ENCODE measurements at regions of chr10 and their contacts with region 1.

Region 1: DNA sequence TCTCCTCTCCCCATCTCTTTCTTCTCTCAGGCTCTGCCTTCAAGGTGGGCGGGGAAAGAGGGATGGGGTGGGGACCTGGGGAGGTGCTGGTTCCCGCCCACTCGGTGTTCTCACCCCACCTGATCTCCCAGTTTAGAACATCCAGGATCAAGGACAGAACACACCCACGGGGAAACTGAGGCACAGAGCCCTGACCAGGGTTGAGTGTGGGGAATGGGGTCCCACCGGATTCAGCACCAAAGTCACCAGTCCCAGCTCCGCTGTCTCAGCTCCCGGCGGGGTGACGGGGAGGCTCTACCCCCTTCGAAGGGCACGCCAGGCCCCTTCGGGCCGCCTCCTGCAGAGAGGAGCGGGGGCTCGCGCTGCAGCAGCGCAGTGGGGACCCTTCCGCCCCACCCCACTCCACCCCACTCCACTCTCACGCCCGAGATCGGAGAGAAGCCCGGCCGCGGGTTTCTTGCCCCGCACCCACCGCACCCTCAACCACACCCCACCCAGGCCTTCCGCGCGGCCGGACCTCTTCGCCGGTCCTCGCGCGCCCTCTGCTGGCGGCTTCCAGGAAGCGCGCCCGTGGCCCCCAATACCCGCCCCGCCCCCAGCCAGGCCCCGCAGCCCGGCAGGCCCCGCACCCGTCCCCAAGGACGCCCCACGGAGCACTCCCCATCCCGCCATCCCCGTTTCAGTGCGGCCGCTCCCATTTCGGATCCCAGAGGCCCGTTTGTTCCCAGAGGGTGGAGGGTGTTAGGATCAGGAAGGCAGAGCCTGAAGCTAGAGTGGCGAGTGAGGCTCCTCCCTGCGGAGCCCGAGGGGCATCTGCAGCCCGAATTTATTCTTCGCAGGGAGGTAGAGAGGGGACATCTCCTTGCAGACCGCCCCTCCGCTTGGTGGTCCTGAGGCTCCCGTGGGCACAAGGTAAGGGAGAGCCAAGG is 18.0 kb downstream of the POLL start:
- DNase-seq: peak; percentile 69 to 88
- ATAC-seq: peak; percentile 69 to 88
- H3K4me3 ChIP-seq: peak overlapping the region; percentile 63
- H3K27ac ChIP-seq: peak overlapping the region; percentile 81 to 92
- H3K4me1 ChIP-seq: peaks cover 10% of the 10 kb centered on the region; the same call in 2 of the 3 replicates
- CTCF ChIP-seq: peak; percentile 93
- EP300 ChIP-seq: no peak
- POLR2A ChIP-seq: peak; percentile 26; the same call in 1 of the 2 replicates
- RAD21 ChIP-seq: peak; percentile 75 to 96

Region 2: DNA sequence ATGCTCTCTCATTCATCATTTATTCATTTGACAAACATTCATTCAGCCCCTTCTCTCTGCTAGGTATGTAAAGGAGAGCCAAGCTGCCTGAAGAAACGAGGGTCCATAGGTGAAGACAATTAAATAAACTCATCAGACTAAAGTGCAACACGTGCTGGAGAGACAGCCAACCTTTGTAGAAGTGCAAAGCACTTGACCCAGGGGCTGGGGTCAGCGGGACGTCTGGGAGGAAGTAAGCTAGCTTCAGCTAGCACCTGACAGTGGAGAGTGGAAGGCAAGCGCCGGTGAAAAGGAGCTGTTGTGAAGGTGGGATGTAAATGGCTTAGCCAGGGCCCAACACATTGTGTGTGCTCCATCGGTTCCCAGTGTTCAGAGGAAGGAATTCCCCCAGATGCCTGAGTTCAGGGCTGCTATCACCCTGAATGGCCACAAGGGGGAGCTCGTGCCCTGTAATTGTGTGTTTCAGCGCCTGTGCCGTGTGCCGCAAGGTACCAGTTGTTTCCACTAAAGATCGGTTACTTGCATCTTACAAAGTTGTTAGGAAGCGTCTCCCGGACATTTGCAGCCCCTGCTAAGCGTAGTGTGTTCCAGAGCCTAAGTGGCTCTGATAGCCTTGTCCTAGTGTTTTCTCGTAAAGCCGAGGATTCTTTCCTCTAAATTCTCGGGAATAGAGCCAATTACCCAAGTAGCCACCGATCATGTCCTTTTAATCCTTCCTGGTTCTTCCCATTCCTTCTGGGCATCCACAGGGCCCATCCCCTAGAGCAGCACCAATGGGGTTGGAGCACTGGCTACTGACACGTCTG is 408.4 kb before region 1 on chr10:
- CTCF ChIA-PET with region 1: interaction called, 21 read pairs
- POLR2A ChIA-PET with region 1: no interaction called
- DNase-seq: peak; percentile 80 to 87
- ATAC-seq: peak; percentile 94 to 96
- H3K4me3 ChIP-seq: peak overlapping the region; percentile 44
- H3K27ac ChIP-seq: peak overlapping the region in 1 of 2 experiments; percentile 49; a peak in 1 of 6 replicates
- H3K4me1 ChIP-seq: 0 out of 3 replicates have a peak, but pooled peaks cover 6% of the 10 kb centered on the region
- CTCF ChIP-seq: peak; percentile 95
- EP300 ChIP-seq: no peak
- POLR2A ChIP-seq: no peak
- RAD21 ChIP-seq: peak; percentile 90 to 91

Region 3: GRCh38 chr10:101441541-101442455 is 128.3 kb before region 1 on chr10:
- CTCF ChIA-PET with region 1: interaction called, 13 read pairs
- POLR2A ChIA-PET with region 1: no interaction called
- DNase-seq: peak; percentile 62 to 83
- ATAC-seq: peak; percentile 98 to 99
- H3K4me3 ChIP-seq: no peak overlapping the region
- H3K27ac ChIP-seq: no peak overlapping the region
- H3K4me1 ChIP-seq: peaks cover 5% of the 10 kb centered on the region; the same call in 1 of the 3 replicates
- CTCF ChIP-seq: peak; percentile 83
- EP300 ChIP-seq: no peak
- POLR2A ChIP-seq: no peak
- RAD21 ChIP-seq: peak; percentile 86 to 89

Region 4: GRCh38 chr10:101552442-101552841 is 17.7 kb before region 1 on chr10:
- CTCF ChIA-PET with region 1: interaction called, 22 read pairs
- POLR2A ChIA-PET with region 1: no interaction called
- DNase-seq: no peak
- ATAC-seq: no peak
- H3K4me3 ChIP-seq: no peak overlapping the region
- H3K27ac ChIP-seq: no peak overlapping the region
- H3K4me1 ChIP-seq: no peaks in the 10 kb centered on the region
- CTCF ChIP-seq: no peak
- EP300 ChIP-seq: no peak
- POLR2A ChIP-seq: no peak
- RAD21 ChIP-seq: no peak

Region 5: GRCh38 chr10:101587725-101588653 is 17.9 kb after region 1 on chr10 and contains the starts of genes DPCD and POLL:
- CTCF ChIA-PET with region 1: interaction called, 31 read pairs
- POLR2A ChIA-PET with region 1: interaction called, 3 read pairs
- DNase-seq: peak; percentile 90 to 99
- ATAC-seq: peak; percentile 97 to 98
- H3K4me3 ChIP-seq: peak within 1 kb of the TSS; percentile 69
- H3K27ac ChIP-seq: peak within 1 kb of the TSS; percentile 85 to 96
- H3K4me1 ChIP-seq: peaks cover 15% of the 10 kb centered on the region
- CTCF ChIP-seq: no peak
- EP300 ChIP-seq: no peak
- POLR2A ChIP-seq: peak; percentile 48; the same call in 1 of the 2 replicates
- RAD21 ChIP-seq: no peak
- polyA plus RNA-seq, gene DPCD: 39.7 and 40.8 TPM in 2 replicates
- polyA plus RNA-seq, gene POLL: 16.7 and 18.1 TPM in 2 replicates

Region 6: GRCh38 chr10:101644002-101644401 is 73.9 kb after region 1 on chr10:
- CTCF ChIA-PET with region 1: no interaction called
- POLR2A ChIA-PET with region 1: no interaction called
- DNase-seq: no peak
- ATAC-seq: no peak
- H3K4me3 ChIP-seq: no peak overlapping the region
- H3K27ac ChIP-seq: no peak overlapping the region
- H3K4me1 ChIP-seq: no peaks in the 10 kb centered on the region
- CTCF ChIP-seq: no peak
- EP300 ChIP-seq: no peak
- POLR2A ChIP-seq: no peak
- RAD21 ChIP-seq: no peak

Measured in A549 (cell line).